Left ventricle myocardium superior (tissue), 1 donor: ENCODE measurements at regions of chr11 and their contacts with region 1.

Region 1: DNA sequence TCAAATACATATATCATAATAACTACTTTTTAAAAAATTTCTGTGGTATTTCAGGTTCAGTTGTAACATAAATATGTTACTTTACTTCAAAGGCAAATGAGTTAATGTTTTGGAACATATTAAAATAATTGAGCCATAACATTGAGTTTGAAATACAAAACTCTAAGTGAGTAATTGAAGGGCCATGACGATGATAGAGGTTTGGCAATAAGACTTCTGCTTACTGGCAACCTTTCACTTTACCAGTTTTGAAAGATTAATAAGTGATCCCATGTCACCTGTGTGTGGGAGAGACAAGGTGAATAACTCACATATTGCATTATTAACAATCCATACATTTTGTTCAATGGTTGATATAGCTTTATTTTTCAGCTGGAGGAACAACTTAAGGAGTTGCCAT is 144.4 kb downstream of the GRIA4 start:
- DNase-seq: no peak
- ATAC-seq: no peak

Region 2: GRCh38 chr11:105838668-105839384 is 84.6 kb after region 1 on chr11:
- intact Hi-C with region 1: no loop called
- DNase-seq: no peak
- ATAC-seq: no peak

Region 3: DNA sequence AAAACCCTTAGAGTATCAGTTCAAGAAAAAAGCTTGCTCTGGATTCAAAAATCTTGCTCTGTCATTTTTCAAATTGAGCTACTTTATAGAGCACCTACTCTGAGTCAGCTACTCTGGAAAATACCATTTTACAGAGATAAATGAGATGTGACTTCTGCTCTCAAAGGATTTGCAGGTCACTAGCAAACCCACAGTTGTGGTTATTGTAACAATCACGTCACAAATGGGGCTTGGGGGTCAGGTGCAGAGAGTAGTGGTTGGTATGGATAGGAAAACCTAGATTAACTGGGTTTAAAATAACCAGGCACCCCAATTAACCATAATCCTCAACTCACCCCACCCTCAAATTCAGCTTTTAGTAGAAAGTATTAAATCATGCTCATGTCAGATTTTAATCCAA is 215.5 kb after region 1 on chr11:
- intact Hi-C with region 1: loop called (anchors 5 kb)
- DNase-seq: no peak
- ATAC-seq: no peak